Caco-2 (cell line): ENCODE measurements at regions of chr10 and their contacts with region 1.

Region 1: DNA sequence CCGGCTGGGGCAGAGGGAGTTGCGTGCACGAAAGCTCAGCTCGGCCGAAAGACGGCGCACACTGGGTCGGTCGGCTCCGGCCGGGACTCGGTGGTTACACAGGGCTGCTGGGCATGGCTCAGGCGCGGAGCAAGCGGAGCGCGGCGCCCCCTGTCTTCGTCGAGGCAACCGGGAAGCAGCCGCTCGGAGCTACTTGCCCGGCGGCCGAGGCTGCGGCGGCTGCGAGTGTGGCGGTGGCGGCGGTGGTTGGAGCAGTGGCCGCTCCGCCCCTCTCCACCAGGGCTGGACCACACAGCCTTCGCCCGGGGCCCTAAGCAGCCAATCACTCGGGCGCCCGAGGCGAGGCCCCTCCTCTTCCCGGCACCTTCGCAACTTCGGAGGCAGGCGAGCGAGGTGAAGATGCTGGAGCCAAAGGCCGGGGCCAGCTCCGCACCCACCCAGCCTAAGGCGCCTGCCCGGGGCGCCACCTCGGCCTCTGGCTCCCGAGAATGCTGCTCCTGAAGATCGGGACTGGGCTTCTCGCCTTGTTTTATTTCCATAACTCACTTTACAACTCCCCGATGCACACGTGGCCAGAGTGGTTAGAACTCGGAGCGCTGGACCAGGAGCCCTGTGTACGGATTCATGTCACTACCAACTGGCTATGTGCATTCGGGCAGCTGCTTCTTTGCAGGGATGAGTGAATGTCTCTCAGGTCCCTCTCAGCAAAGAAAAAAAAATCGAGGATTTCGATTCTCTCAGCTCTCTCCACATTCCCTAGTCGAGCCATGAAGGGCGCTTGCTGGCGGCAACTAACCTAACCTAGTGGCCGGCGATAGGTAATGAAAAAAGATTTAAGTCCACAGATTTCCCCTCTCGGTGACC is at the start of gene TLL2:
- DNase-seq: peak; percentile 94 to 96
- H3K4me3 ChIP-seq: peak within 1 kb of the TSS; percentile 71
- H3K4me3 Mint-ChIP-seq: peak within 1 kb of the TSS; percentile 82
- H3K27ac Mint-ChIP-seq: no peak within 1 kb of the TSS
- H3K4me1 ChIP-seq: peaks cover 3% of the 10 kb centered on the region; the same call in 1 of the 2 replicates
- H3K4me1 Mint-ChIP-seq: no peaks in the 10 kb centered on the region
- H3K27me3 ChIP-seq: no peaks in the 10 kb centered on the region; the same call in 1 of the 2 replicates
- H3K27me3 Mint-ChIP-seq: peaks cover 4% of the 10 kb centered on the region
- CTCF ChIP-seq: peak; percentile 41 to 58
- total RNA-seq, gene TLL2: 0.14 TPM in 1 of 2 replicates, not detected in the other

Region 2: DNA sequence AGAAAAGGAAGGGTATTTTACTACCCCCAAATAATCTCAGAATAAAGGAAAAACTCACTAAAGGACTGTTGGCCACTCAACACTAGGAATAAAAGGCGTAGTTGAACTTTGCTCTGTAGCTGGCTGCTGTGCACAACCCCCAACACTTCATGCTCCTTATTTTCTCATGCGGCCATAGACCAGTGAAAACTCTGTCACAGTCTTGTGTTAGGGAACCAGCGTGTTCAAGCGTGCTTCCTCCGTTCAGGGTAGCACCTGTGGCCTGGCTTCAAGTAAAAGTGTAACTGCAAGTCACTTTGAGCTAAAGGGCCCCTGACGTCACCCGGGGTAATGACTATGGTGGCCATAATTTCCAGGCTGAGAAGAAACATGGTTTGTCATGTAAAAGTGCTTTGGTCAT is 269.6 kb before region 1 on chr10:
- CTCF ChIA-PET with region 1: no interaction called
- POLR2A ChIA-PET with region 1: no interaction called
- intact Hi-C with region 1: no loop called
- DNase-seq: no peak
- H3K4me3 ChIP-seq: no peak overlapping the region
- H3K4me3 Mint-ChIP-seq: no peak overlapping the region
- H3K27ac Mint-ChIP-seq: no peak overlapping the region
- H3K4me1 ChIP-seq: peaks cover 16% of the 10 kb centered on the region; the same call in 1 of the 2 replicates
- H3K4me1 Mint-ChIP-seq: no peaks in the 10 kb centered on the region
- H3K27me3 ChIP-seq: no peaks in the 10 kb centered on the region
- H3K27me3 Mint-ChIP-seq: no peaks in the 10 kb centered on the region
- CTCF ChIP-seq: no peak

Region 3: DNA sequence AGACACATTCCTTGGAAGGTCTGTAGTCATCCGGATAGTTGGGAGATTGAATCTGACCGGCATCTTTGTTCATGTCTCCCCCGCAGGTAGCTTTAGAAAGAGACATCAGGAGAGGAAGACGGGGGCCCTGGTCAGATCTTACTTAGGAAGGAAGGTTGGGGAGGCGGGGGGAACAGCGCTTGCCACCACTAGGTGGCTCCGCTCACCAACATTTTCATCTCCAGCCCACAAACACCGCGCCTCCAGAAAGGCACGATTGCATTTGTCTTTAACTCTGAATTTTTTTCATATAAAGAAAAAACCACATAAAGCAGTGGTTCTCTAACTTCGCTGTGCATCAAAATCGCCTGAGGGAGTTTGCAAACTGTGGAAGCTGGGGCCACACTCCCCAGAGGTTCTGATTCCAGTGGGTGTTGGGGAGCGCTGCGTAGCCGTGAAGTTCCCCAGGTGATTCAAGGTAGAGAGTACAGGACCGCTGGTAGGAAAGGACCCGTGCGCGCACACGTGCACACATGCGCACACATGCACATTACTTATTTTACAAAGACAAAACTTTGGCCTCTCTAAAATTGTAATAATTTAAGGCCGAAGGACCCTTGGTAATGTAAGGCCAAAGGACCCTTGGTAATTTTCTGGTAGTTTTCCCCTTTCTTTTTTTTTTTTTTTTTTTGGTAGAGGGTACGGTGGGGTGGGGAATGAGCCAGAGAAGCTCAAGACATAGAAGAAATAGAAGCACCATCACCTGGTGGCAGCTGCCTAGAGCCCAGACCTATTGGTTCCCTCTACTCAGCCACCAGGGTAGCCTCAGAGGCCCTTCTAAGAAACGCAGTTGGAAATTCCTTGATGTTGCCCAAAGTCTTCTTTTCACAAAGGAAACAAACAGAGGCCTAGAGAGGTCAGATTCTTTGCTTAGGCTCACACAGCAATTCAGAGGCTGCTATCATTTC is 117.7 kb before region 1 on chr10:
- CTCF ChIA-PET with region 1: interaction called, 11 read pairs
- POLR2A ChIA-PET with region 1: no interaction called
- intact Hi-C with region 1: loop called (anchors 1 kb)
- DNase-seq: peak; percentile 56 to 67
- H3K4me3 ChIP-seq: 0 out of 2 replicates have a peak overlapping the region, but pooled peaks have one; percentile 8
- H3K4me3 Mint-ChIP-seq: no peak overlapping the region
- H3K27ac Mint-ChIP-seq: no peak overlapping the region
- H3K4me1 ChIP-seq: no peaks in the 10 kb centered on the region
- H3K4me1 Mint-ChIP-seq: no peaks in the 10 kb centered on the region
- H3K27me3 ChIP-seq: no peaks in the 10 kb centered on the region; the same call in 1 of the 2 replicates
- H3K27me3 Mint-ChIP-seq: peaks cover 22% of the 10 kb centered on the region
- CTCF ChIP-seq: peak; percentile 88 to 94

Region 4: DNA sequence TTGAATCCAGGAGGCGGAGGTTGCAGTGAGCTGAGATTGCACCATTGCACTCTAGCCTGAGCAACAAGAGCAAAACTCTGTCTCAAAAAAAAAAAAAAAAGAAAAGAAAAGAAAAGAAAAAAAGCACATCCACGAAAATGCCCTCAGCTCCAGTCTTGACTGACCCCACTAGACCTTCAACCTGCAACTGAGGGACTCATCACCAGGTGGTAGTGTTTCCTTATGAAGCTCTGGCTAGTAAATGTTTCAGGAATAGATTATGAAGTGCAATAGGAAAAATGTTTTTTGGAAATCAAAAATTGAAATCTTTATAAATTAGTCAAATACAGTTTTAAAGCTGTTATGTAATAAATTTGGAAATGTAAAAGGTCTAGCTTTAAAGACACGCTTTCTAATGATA is 22.6 kb before region 1 on chr10:
- CTCF ChIA-PET with region 1: interaction called, 13 read pairs
- POLR2A ChIA-PET with region 1: no interaction called
- intact Hi-C with region 1: loop called (anchors 1 kb)
- DNase-seq: peak in 1 of 2 experiments; percentile 35
- H3K4me3 ChIP-seq: no peak overlapping the region
- H3K4me3 Mint-ChIP-seq: no peak overlapping the region
- H3K27ac Mint-ChIP-seq: no peak overlapping the region
- H3K4me1 ChIP-seq: no peaks in the 10 kb centered on the region
- H3K4me1 Mint-ChIP-seq: no peaks in the 10 kb centered on the region
- H3K27me3 ChIP-seq: no peaks in the 10 kb centered on the region
- H3K27me3 Mint-ChIP-seq: peaks cover 8% of the 10 kb centered on the region
- CTCF ChIP-seq: peak; percentile 38 to 59